ENCODE measurements at regions of chr19 and their contacts with region 1.

Region 1: DNA sequence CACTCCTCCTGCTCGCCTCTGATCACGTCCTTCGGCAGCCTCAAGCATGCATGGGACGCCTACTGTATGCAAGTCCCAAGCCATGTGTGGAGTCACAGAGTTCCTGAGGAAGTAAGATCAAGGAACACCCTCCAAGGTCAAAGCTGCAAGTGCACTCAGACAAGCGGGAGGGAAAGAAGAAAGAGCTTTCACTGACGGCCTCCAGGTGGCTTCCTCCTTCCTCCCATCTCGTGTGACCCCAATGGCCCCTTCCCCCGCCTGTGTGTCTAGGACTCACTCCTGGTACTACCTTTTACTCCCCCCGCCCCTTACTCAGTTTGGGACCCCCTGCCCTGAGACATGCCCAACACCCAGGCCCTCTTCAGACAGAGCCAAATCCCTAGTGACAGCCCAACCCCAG is 6.0 kb downstream of the HAUS8 start:
- DNase-seq: no peak

Region 2: DNA sequence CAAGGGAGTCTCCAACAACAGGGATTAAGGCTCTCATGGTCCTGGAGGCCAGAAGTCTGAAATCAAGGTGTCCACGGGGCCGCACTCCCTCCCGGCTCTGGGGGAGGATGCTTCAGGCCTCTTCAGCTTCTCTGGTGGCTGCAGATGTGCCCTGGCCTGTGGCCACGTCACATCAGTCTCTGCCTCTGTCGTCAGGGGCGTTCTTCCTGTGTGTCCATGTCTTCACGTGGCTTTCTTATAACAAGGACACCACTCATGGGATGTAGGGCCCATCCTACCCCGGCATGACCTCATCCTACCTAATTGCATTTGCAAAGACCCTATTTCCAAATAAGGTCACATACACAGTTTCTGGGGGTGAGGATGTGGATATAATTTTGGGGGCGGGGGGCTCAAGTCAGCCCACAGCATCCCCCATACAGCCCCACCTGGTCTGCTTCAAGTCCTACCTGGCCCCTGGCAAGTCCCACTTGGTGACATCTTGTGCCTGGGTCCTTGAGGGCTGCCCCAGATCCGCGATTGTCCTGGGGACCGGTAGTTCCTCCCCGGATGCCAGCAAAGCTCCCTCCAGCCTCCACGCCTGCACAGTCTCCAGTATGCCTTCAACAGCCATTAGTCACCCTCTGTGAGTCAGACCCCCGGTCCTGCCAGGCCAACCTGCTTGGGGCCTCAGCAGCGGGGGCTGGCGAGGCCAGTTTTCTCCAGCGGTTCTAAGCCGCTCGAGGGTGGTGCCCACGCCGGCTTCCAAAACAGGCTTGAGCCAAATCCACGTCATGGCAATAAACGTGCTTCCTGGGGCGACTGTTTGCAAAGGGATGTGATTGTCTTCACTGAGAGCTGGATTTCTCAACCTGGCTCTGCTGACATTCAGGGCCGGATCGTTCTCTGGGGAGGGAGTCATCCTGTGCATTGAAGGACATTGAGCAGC is 38.6 kb after region 1 on chr19:
- intact Hi-C with region 1: no loop called
- DNase-seq: peak; percentile 38 to 96 (median 70)

Region 3: GRCh38 chr19:17235618-17236377 is 166.6 kb after region 1 on chr19:
- intact Hi-C with region 1: loop called (anchors 1 kb)
- DNase-seq: peak; percentile 55 to 97 (median 80)

Region 4: GRCh38 chr19:17282488-17283255 is 213.5 kb after region 1 on chr19:
- intact Hi-C with region 1: loop called (anchors 1 kb)
- DNase-seq: peak; percentile 60 to 97 (median 78)

Measured in posterior cingulate gyrus (tissue), 11 donors.